SK-N-SH (cell line): ENCODE measurements at regions of chr21 and their contacts with region 1.

Region 1: GRCh38 chr21:33360881-33361602 is 36.3 kb downstream of the IFNAR1 start:
- DNase-seq: peak; percentile 71
- H3K4me3 ChIP-seq: peak overlapping the region; percentile 21 to 29; a peak in 2 of 4 replicates
- H3K27ac ChIP-seq: peak overlapping the region; percentile 56 to 87; a peak in 3 of 4 replicates
- H3K4me1 ChIP-seq: peaks cover 14% of the 10 kb centered on the region in 2 experiments; a peak in 3 of 4 replicates
- H3K27me3 ChIP-seq: no peaks in the 10 kb centered on the region
- CTCF ChIP-seq: peak; percentile 92
- EP300 ChIP-seq: peak in 1 of 2 experiments; percentile 22; a peak in 1 of 4 replicates
- RAD21 ChIP-seq: peak; percentile 63

Region 2: GRCh38 chr21:32994305-32994704 is 366.7 kb before region 1 on chr21:
- CTCF ChIA-PET with region 1: no interaction called
- POLR2A ChIA-PET with region 1: no interaction called
- DNase-seq: peak; percentile 24
- H3K4me3 ChIP-seq: peak overlapping the region in 1 of 2 experiments; percentile 35; a peak in 1 of 4 replicates
- H3K27ac ChIP-seq: no peak overlapping the region
- H3K4me1 ChIP-seq: no peaks in the 10 kb centered on the region
- H3K27me3 ChIP-seq: peaks cover 59% of the 10 kb centered on the region
- CTCF ChIP-seq: peak; percentile 67
- EP300 ChIP-seq: no peak
- RAD21 ChIP-seq: peak; percentile 51

Region 3: DNA sequence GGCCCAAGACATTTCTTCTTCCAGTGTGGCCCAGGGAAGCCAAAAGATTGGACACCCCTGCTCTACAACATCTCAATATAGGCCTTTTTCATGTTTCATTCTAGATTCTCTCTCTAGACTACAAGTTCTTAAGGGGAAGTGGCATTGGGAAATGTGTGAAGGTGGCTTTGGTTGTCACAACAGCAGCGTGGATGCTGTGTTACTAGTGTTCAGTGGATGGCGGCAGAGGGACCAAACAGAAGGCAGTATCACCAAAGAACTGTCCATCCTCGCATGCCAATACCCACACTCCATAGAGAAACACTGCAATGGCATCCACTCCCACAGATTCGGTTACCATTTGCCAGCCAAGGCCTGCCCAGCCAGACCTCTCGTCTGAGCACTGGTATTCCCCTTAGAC is 155.6 kb before region 1 on chr21:
- CTCF ChIA-PET with region 1: interaction called, 31 read pairs
- POLR2A ChIA-PET with region 1: no interaction called
- DNase-seq: no peak
- H3K4me3 ChIP-seq: no peak overlapping the region
- H3K27ac ChIP-seq: no peak overlapping the region
- H3K4me1 ChIP-seq: peaks cover 0 to 5% of the 10 kb centered on the region in 2 experiments; a peak in 2 of 4 replicates
- H3K27me3 ChIP-seq: no peaks in the 10 kb centered on the region
- CTCF ChIP-seq: no peak
- EP300 ChIP-seq: no peak
- RAD21 ChIP-seq: no peak

Region 4: GRCh38 chr21:33332143-33332542 is 28.9 kb before region 1 on chr21:
- CTCF ChIA-PET with region 1: interaction called, 13 read pairs
- POLR2A ChIA-PET with region 1: no interaction called
- DNase-seq: no peak
- H3K4me3 ChIP-seq: no peak overlapping the region
- H3K27ac ChIP-seq: no peak overlapping the region
- H3K4me1 ChIP-seq: peaks cover 0 to 7% of the 10 kb centered on the region in 2 experiments; a peak in 1 of 4 replicates
- H3K27me3 ChIP-seq: no peaks in the 10 kb centered on the region
- CTCF ChIP-seq: no peak
- EP300 ChIP-seq: no peak
- RAD21 ChIP-seq: no peak

Region 5: GRCh38 chr21:33380483-33380998 is 19.5 kb after region 1 on chr21:
- CTCF ChIA-PET with region 1: interaction called, 11 read pairs
- POLR2A ChIA-PET with region 1: no interaction called
- DNase-seq: no peak
- H3K4me3 ChIP-seq: no peak overlapping the region
- H3K27ac ChIP-seq: peak overlapping the region; percentile 18 to 98; a peak in 3 of 4 replicates
- H3K4me1 ChIP-seq: peaks cover 5 to 25% of the 10 kb centered on the region in 2 experiments; a peak in 3 of 4 replicates
- H3K27me3 ChIP-seq: no peaks in the 10 kb centered on the region
- CTCF ChIP-seq: no peak
- EP300 ChIP-seq: peak in 1 of 2 experiments; percentile 30; a peak in 1 of 4 replicates
- RAD21 ChIP-seq: no peak

Region 6: DNA sequence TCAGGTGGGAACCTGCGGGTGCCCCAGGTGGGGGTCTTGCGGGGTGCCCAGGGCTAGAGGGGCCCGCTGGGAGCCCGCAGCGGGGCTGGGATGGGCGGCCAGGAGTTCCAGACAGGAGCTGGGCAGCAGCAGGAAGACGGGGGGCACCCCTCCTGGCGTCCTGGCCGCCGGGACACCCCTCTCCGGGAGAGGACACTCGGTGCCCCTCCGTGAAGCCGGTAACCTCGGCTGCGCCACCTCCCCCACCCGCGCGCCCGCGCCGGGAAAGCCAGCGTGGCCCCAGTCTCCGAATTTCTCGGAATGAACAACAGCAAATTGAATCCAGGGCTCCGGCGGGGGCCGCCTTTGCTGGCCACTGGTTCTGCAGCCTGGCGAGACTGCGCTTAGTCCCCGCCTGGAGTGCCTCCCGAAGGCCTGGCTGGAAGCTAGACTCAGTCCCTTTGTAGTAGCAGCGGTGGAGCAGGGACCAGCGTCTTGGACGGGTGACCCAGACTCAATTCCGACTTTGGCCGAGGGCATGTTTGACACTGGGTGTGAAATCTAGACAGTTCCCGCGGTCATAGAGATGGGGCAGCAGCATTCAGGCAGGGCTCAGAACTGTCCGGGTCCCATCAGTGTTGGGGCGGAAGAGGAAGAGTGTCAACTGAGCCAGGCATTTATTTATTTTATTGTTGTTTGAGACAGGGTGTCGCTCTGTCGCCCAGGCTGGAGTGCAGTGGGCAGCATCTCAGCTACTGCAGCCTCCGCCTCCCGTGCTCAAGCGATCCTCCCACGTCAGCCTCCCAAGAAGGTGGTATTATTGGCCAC is 42.9 kb after region 1 on chr21:
- CTCF ChIA-PET with region 1: interaction called, 12 read pairs
- POLR2A ChIA-PET with region 1: no interaction called
- DNase-seq: peak; percentile 76
- H3K4me3 ChIP-seq: peak overlapping the region; percentile 67 to 78
- H3K27ac ChIP-seq: peak overlapping the region; percentile 77 to 81
- H3K4me1 ChIP-seq: peaks cover 7% of the 10 kb centered on the region in 2 experiments; a peak in 1 of 4 replicates
- H3K27me3 ChIP-seq: no peaks in the 10 kb centered on the region
- CTCF ChIP-seq: no peak
- EP300 ChIP-seq: no peak
- RAD21 ChIP-seq: no peak

Region 7: GRCh38 chr21:33479679-33480480 is 118.8 kb after region 1 on chr21 and contains the start of gene TMEM50B:
- CTCF ChIA-PET with region 1: interaction called, 10 read pairs
- POLR2A ChIA-PET with region 1: no interaction called
- DNase-seq: peak; percentile 98
- H3K4me3 ChIP-seq: peak within 1 kb of the TSS; percentile 67 to 80
- H3K27ac ChIP-seq: peak within 1 kb of the TSS; percentile 87 to 90
- H3K4me1 ChIP-seq: peaks cover 0 to 4% of the 10 kb centered on the region in 2 experiments; a peak in 1 of 4 replicates
- H3K27me3 ChIP-seq: no peaks in the 10 kb centered on the region
- CTCF ChIP-seq: peak; percentile 53
- EP300 ChIP-seq: 0 out of 4 replicates have a peak, but pooled peaks of 1 of the 2 experiments have one; percentile 14
- RAD21 ChIP-seq: peak; percentile 43
- polyA plus RNA-seq, gene TMEM50B: 27.3 and 41.3 TPM in 2 replicates

Region 8: GRCh38 chr21:33491373-33492102 is 130.5 kb after region 1 on chr21 and contains the start of gene DNAJC28:
- CTCF ChIA-PET with region 1: no interaction called
- POLR2A ChIA-PET with region 1: no interaction called
- DNase-seq: peak; percentile 96
- H3K4me3 ChIP-seq: peak within 1 kb of the TSS; percentile 67 to 81
- H3K27ac ChIP-seq: peak within 1 kb of the TSS; percentile 26 to 83; a peak in 2 of 4 replicates
- H3K4me1 ChIP-seq: no peaks in the 10 kb centered on the region
- H3K27me3 ChIP-seq: no peaks in the 10 kb centered on the region
- CTCF ChIP-seq: no peak
- EP300 ChIP-seq: no peak
- RAD21 ChIP-seq: no peak
- polyA plus RNA-seq, gene DNAJC28: 0.58 and 0.88 TPM in 2 replicates